ENCODE measurements at regions of chr6 and their contacts with region 1.

Region 1: GRCh38 chr6:33771146-33772081 is 17.5 kb downstream of the LEMD2 start:
- H3K4me3 ChIP-seq: no peak overlapping the region
- H3K27ac ChIP-seq: no peak overlapping the region
- H3K4me1 ChIP-seq: peaks cover 5% of the 10 kb centered on the region
- CTCF ChIP-seq: peak; percentile 91

Region 2: DNA sequence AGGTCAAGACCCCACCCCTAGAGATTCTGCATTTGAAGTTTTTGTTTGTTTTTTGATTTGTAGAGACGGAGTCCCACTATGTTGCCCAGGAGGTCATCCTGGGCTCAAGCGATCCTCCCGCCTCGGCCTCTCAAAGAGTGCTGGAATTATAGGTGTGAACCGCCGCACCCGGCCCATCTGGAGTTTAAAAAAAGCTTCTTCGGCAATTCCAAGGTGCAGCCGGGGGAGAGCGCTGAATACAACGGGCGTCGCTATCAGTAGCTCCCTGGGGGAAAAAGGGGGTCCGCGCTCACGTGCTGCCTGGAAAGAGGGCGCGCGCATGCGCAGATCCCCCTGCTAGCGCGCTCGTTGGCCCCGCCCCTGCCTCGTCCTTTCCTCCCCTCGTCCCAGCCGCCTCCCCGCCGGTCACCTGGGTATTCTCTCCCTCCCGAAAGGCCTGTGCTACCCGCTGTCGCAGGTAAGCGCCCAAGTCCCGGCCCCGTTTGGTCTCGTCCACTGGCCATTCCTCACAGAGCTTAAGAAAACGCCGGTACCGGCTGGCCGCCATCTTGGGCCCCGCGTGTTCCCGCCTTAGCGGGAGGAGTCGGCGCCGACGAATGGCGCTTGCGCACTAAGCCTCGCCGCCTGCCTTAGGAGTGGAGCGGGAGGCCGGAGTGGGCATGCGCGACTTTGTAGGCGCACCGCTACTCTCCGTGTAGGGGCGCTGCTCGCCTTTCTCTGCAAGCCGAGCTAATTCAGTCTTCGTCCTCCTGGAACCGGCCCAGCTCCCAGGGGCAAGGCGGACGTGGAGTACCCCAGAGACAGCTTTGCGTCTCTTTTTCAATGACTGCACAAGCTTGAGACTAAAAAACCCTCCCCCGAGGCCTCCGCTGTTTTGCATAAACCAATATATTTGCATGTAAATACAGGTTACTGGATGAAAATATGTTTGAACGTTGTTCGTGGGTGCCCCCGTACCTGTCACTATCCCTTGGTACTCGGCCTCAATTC is 60.0 kb before region 1 on chr6 and contains the start of gene UQCC2:
- CTCF ChIA-PET with region 1: interaction called, 13 read pairs
- POLR2A ChIA-PET with region 1: interaction called, 17 read pairs
- H3K4me3 ChIP-seq: peak within 1 kb of the TSS; percentile 89
- H3K27ac ChIP-seq: peak within 1 kb of the TSS; percentile 97
- H3K4me1 ChIP-seq: peaks cover 7% of the 10 kb centered on the region; the same call in 1 of the 2 replicates
- CTCF ChIP-seq: peak; percentile 81

Region 3: GRCh38 chr6:33788694-33789549 is 17.5 kb after region 1 on chr6 and contains the start of gene LEMD2:
- CTCF ChIA-PET with region 1: interaction called, 24 read pairs
- POLR2A ChIA-PET with region 1: interaction called, 11 read pairs
- H3K4me3 ChIP-seq: peak within 1 kb of the TSS; percentile 67
- H3K27ac ChIP-seq: peak within 1 kb of the TSS; percentile 93
- H3K4me1 ChIP-seq: peaks cover 9% of the 10 kb centered on the region
- CTCF ChIP-seq: no peak

Region 4: GRCh38 chr6:33806841-33807240 is 35.4 kb after region 1 on chr6:
- CTCF ChIA-PET with region 1: interaction called, 11 read pairs
- POLR2A ChIA-PET with region 1: no interaction called
- H3K4me3 ChIP-seq: no peak overlapping the region
- H3K27ac ChIP-seq: no peak overlapping the region
- H3K4me1 ChIP-seq: no peaks in the 10 kb centered on the region
- CTCF ChIP-seq: no peak

Region 5: DNA sequence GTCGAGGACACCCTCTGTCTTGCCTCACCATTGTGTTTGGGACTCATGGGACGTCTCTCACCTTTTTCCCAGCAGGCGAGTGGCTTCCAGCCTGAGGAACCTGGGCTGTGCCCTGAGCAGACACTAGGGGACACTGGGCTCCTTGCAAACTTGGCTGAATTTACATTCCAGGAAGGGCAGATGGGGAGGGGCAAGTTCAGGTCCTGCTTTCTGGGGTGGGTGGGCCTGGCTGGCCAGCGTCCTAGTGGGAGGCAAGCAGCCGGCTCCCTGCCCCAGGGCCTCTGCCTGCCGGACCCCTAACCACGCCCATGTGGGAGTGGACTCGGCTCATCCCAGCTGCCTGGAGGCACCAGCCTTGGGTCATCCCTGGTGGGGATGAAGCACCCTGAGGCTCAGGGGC is 80.5 kb after region 1 on chr6:
- CTCF ChIA-PET with region 1: interaction called, 22 read pairs
- POLR2A ChIA-PET with region 1: no interaction called
- H3K4me3 ChIP-seq: no peak overlapping the region
- H3K27ac ChIP-seq: no peak overlapping the region
- H3K4me1 ChIP-seq: no peaks in the 10 kb centered on the region
- CTCF ChIP-seq: peak; percentile 63

Region 6: GRCh38 chr6:34055223-34055933 is 284.0 kb after region 1 on chr6:
- CTCF ChIA-PET with region 1: interaction called, 21 read pairs
- POLR2A ChIA-PET with region 1: no interaction called
- H3K4me3 ChIP-seq: no peak overlapping the region
- H3K27ac ChIP-seq: no peak overlapping the region
- H3K4me1 ChIP-seq: no peaks in the 10 kb centered on the region
- CTCF ChIP-seq: peak; percentile 85

Measured in HEK293 (cell line).